ENCODE measurements at regions of chr17 and their contacts with region 1.

Region 1: DNA sequence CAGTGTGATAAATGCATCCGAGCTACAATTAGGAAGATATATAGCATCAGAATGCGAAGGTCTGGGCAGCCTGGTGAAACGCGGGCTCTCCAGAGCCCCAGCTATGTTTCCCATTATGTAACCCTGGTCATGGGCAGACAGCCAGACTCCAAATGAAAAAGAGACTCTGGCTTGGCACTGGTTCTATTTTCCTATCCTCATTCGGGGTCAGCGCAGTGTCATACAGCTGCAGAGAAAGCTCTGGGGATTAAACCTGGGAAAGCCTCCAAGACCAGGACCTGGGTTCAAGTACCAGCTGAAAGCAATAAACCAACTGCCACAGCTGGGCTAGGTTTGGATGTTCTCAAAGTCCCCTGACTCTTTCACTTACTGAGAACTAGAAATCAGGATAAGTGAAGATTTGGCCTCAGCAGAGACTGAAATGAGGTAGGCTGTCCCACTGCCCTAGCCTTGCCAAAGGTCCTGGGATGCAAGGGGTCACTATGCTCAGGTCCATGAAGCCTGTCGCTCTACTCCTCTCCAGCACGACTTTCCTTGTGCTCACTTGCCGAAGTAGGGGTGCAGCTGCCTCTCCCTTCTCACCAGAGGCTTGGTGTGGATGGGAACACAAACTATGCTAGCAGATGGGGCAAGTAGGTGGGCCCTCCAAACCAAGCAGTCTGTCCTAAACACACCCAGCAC is 123.8 kb downstream of the SMG6 start:
- DNase-seq: peak; percentile 71 to 94 (median 93)
- ATAC-seq: peak; percentile 55 to 75 (median 74)
- H3K4me3 ChIP-seq: no peak overlapping the region
- H3K27ac ChIP-seq: peak overlapping the region; percentile 76 to 97 (median 86)
- H3K4me1 ChIP-seq: peaks cover 33 to 87% (median 80%) of the 10 kb centered on the region in 12 donors
- H3K27me3 ChIP-seq: no peaks in the 10 kb centered on the region
- CTCF ChIP-seq: no peak
- POLR2A ChIP-seq: no peak

Region 2: DNA sequence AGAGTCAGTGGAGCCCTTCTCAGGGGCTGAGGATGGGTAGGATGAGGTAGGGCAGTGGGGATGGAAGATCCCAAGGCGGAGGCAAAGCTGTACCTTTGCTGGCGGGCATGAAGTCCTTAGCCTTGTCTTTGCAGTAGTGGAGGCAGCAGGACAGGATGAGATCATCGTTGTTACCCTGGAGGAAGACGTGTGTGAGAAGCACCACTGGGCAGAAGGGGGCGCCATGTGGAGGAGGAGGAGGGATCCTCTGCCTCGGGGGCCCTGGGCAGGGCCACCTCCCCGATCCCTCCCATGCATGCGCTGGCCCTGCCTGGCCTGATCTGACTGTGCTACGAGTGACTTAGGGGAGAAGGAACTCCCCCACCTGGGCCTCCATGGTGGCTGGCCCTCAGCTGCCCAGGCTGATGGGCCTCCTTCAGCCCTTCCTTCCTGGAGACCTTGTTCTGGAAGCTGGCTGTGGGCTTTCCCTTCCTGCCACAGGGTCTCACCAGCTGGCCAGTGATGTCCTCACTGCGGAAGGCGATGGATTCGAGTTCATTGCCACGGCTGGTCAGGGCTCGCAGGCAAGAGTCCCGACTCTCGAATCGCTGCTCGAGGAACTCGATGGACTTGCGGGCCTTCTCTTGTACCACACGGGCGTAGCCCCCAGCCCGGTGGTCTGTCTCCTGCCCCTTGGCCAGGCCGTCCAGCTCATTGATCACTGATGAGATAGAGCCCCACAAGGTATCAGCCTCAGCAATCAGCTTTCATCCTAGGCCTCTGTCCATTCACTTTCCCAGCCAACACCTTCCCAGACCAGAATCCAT is 114.6 kb before region 1 on chr17:
- intact Hi-C with region 1: loop called in 7 of 10 experiments (anchors 2 to 5 kb)
- DNase-seq: peak in 4 of 5 donors; percentile 57 to 79 (median 66)
- ATAC-seq: peak in 3 of 4 donors; percentile 8 to 31 (median 17)
- H3K4me3 ChIP-seq: no peak overlapping the region
- H3K27ac ChIP-seq: peak overlapping the region in 11 of 12 donors; percentile 67 to 98 (median 93)
- H3K4me1 ChIP-seq: peaks cover 3 to 94% (median 85%) of the 10 kb centered on the region in 12 donors
- H3K27me3 ChIP-seq: peaks cover 0 to 6% (median 0%) of the 10 kb centered on the region in 9 donors
- CTCF ChIP-seq: peak in 9 of 12 donors; percentile 5 to 56 (median 23)
- POLR2A ChIP-seq: no peak

Region 3: GRCh38 chr17:2094891-2095535 is 84.7 kb before region 1 on chr17:
- intact Hi-C with region 1: loop called in 3 of 10 experiments (anchors 5 to 10 kb)
- DNase-seq: peak; percentile 76 to 87 (median 82)
- ATAC-seq: peak; percentile 85 to 93 (median 92)
- H3K4me3 ChIP-seq: peak overlapping the region in 1 of 12 donors; percentile 16
- H3K27ac ChIP-seq: peak overlapping the region in 11 of 12 donors; percentile 8 to 57 (median 45)
- H3K4me1 ChIP-seq: peaks cover 0 to 43% (median 27%) of the 10 kb centered on the region in 12 donors
- H3K27me3 ChIP-seq: no peaks in the 10 kb centered on the region
- CTCF ChIP-seq: peak; percentile 37 to 82 (median 74)
- POLR2A ChIP-seq: no peak

Region 4: GRCh38 chr17:2222901-2223616 is 43.3 kb after region 1 on chr17:
- intact Hi-C with region 1: loop called in 3 of 10 experiments (anchors 5 kb)
- DNase-seq: peak in 4 of 5 donors; percentile 59 to 87 (median 72)
- ATAC-seq: peak; percentile 93 to 98 (median 96)
- H3K4me3 ChIP-seq: no peak overlapping the region
- H3K27ac ChIP-seq: peak overlapping the region in 11 of 12 donors; percentile 33 to 82 (median 71)
- H3K4me1 ChIP-seq: peaks cover 0 to 32% (median 15%) of the 10 kb centered on the region in 12 donors
- H3K27me3 ChIP-seq: no peaks in the 10 kb centered on the region
- CTCF ChIP-seq: peak in 1 of 12 donors; percentile 6
- POLR2A ChIP-seq: no peak

Region 5: DNA sequence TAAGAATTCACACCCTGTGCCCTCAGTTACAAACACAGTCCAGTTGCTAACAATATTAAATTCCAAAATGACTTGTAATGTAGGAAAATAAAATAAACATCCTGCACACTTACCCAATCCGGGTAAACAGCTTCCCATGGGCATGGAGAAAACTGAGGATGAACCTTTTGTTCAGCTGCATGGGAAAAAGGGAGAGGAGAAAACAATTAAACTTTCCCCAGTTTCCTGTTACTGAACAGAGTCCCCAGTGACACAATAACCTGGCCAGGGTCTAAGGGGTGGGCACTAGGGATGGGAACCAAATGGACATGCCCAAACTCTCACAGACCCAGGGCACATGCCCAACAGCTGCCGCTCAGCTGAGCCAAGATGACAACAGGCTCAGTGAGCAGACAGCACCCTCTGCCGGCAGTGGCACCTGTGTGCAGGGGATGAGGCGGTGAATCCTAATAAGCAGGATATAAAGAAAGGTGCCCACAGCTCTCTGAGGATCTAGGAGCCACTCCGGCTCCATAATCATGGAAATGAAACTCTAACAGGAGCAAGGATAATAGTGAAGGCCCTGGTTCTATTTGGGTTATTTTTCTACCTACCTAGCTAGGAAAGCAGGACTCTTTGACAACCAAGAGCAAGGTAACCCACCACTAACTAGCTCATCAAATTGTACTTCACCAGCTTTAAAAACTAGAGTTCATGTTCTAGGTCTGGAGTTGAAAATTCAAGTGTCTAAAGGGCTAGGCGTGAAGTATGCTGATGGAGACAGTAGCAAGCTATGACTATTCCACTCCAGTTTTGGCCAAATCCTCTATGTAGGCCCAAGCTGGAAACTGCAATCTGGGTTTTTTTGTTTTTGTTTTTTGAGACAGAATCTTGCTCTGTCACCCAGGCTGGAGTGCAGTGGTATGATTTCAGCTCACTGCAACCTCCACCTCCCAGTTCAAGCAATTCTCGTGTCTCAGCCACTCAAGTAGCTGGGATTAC is 65.1 kb after region 1 on chr17:
- intact Hi-C with region 1: loop called in 1 of 10 experiments (anchors 5 kb)
- DNase-seq: peak; percentile 84 to 94 (median 87)
- ATAC-seq: peak; percentile 79 to 92 (median 88)
- H3K4me3 ChIP-seq: no peak overlapping the region
- H3K27ac ChIP-seq: peak overlapping the region in 11 of 12 donors; percentile 22 to 75 (median 56)
- H3K4me1 ChIP-seq: peaks cover 0 to 26% (median 13%) of the 10 kb centered on the region in 12 donors
- H3K27me3 ChIP-seq: no peaks in the 10 kb centered on the region
- CTCF ChIP-seq: peak in 11 of 12 donors; percentile 95 to 100 (median 97)
- POLR2A ChIP-seq: no peak

Region 6: GRCh38 chr17:2323629-2324314 is 144.0 kb after region 1 on chr17:
- intact Hi-C with region 1: no loop called
- DNase-seq: no peak
- ATAC-seq: peak in 2 of 4 donors; percentile 27 to 30
- H3K4me3 ChIP-seq: no peak overlapping the region
- H3K27ac ChIP-seq: no peak overlapping the region
- H3K4me1 ChIP-seq: no peaks in the 10 kb centered on the region
- H3K27me3 ChIP-seq: no peaks in the 10 kb centered on the region
- CTCF ChIP-seq: no peak
- POLR2A ChIP-seq: no peak